Activated CD4-positive, alpha-beta memory T cell treated with anti-CD3 and anti-CD28 coated beads for 36 hours (primary cell): ENCODE measurements at regions of chr20 and their contacts with region 1.

Region 1: GRCh38 chr20:35410613-35411012 is 1.2 kb downstream of the UQCC1 start:
- DNase-seq: no peak
- H3K4me3 Mint-ChIP-seq: peak overlapping the region; percentile 89
- H3K27ac Mint-ChIP-seq: no peak overlapping the region
- H3K4me1 Mint-ChIP-seq: peaks cover 11% of the 10 kb centered on the region
- H3K27me3 Mint-ChIP-seq: no peaks in the 10 kb centered on the region

Region 2: GRCh38 chr20:35248641-35249475 is 161.8 kb before region 1 on chr20:
- CTCF ChIA-PET with region 1: no interaction called
- POLR2A ChIA-PET with region 1: no interaction called
- intact Hi-C with region 1: no loop called
- DNase-seq: no peak
- H3K4me3 Mint-ChIP-seq: no peak overlapping the region
- H3K27ac Mint-ChIP-seq: no peak overlapping the region
- H3K4me1 Mint-ChIP-seq: peaks cover 13% of the 10 kb centered on the region
- H3K27me3 Mint-ChIP-seq: no peaks in the 10 kb centered on the region

Region 3: DNA sequence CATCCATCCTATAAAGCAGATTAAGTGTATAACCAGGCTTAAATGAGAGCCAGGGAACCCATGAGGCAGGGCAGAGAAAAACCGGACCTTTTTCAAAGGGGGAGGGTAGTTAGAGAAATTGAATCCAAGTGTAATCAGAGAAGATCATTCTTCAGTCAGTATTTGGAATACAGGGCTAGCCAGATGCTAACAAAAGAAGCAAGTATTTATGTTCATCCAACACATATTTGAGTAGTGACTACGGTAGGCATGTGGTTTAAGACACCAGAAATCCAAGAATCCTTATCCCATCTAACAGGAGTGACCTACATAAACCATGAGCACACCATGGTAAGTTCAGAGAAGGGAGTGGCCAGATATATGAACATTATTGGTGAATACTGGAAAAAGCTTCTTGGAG is 71.6 kb before region 1 on chr20:
- CTCF ChIA-PET with region 1: no interaction called
- POLR2A ChIA-PET with region 1: no interaction called
- intact Hi-C with region 1: no loop called
- DNase-seq: no peak
- H3K4me3 Mint-ChIP-seq: no peak overlapping the region
- H3K27ac Mint-ChIP-seq: no peak overlapping the region
- H3K4me1 Mint-ChIP-seq: no peaks in the 10 kb centered on the region
- H3K27me3 Mint-ChIP-seq: no peaks in the 10 kb centered on the region

Region 4: DNA sequence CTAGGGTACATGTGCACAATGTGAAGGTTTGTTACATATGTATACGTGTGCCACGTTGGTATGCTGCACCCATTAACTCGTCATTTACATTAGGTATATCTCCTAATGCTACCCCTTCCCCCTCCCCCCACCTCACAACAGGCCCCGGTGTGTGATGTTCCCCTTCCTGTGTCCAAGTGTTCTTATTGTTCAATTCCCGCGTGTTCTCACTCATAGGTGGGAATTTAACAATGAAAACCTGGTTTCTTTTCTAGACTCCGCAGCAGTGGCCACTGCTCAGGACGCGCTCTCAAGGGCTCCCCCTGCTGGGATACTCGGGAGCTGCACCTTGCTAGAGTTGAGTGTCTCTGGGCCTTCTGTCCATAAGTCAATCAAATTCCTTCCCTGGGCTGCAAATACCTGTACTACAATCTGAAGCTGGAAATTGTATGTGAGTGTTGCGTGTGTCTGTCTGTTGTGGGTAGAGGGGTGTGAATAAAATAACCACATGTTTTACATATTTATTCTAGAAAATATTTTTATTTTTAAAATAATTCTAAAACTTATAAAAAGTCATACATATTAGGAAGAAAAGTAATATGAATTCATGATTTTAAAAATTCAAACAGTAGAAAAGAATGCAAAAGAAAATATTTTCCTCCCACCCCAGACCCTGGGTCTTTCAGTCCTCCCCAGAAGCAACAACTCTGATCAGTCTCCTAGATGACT is 36.6 kb after region 1 on chr20:
- CTCF ChIA-PET with region 1: interaction called, 4 read pairs
- POLR2A ChIA-PET with region 1: no interaction called
- intact Hi-C with region 1: loop called (anchors 5 kb)
- DNase-seq: peak; percentile 94
- H3K4me3 Mint-ChIP-seq: peak overlapping the region; percentile 83
- H3K27ac Mint-ChIP-seq: no peak overlapping the region
- H3K4me1 Mint-ChIP-seq: peaks cover 7% of the 10 kb centered on the region
- H3K27me3 Mint-ChIP-seq: peaks cover 4% of the 10 kb centered on the region